HEK293 (cell line): ENCODE measurements at regions of chr5 and their contacts with region 1.

Region 1: GRCh38 chr5:151115274-151115905 is 34.6 kb upstream of the TNIP1 start:
- H3K4me3 ChIP-seq: no peak overlapping the region
- H3K27ac ChIP-seq: no peak overlapping the region
- H3K4me1 ChIP-seq: no peaks in the 10 kb centered on the region
- CTCF ChIP-seq: peak; percentile 54

Region 2: GRCh38 chr5:150764530-150764929 is 350.9 kb before region 1 on chr5:
- CTCF ChIA-PET with region 1: no interaction called
- POLR2A ChIA-PET with region 1: no interaction called
- H3K4me3 ChIP-seq: no peak overlapping the region
- H3K27ac ChIP-seq: no peak overlapping the region
- H3K4me1 ChIP-seq: peaks cover 7% of the 10 kb centered on the region; the same call in 1 of the 2 replicates
- CTCF ChIP-seq: no peak

Region 3: GRCh38 chr5:150801117-150801927 is 314.1 kb before region 1 on chr5:
- CTCF ChIA-PET with region 1: interaction called, 16 read pairs
- POLR2A ChIA-PET with region 1: no interaction called
- H3K4me3 ChIP-seq: peak overlapping the region; percentile 27
- H3K27ac ChIP-seq: no peak overlapping the region
- H3K4me1 ChIP-seq: no peaks in the 10 kb centered on the region
- CTCF ChIP-seq: no peak; the same call in 1 of the 2 replicates

Region 4: DNA sequence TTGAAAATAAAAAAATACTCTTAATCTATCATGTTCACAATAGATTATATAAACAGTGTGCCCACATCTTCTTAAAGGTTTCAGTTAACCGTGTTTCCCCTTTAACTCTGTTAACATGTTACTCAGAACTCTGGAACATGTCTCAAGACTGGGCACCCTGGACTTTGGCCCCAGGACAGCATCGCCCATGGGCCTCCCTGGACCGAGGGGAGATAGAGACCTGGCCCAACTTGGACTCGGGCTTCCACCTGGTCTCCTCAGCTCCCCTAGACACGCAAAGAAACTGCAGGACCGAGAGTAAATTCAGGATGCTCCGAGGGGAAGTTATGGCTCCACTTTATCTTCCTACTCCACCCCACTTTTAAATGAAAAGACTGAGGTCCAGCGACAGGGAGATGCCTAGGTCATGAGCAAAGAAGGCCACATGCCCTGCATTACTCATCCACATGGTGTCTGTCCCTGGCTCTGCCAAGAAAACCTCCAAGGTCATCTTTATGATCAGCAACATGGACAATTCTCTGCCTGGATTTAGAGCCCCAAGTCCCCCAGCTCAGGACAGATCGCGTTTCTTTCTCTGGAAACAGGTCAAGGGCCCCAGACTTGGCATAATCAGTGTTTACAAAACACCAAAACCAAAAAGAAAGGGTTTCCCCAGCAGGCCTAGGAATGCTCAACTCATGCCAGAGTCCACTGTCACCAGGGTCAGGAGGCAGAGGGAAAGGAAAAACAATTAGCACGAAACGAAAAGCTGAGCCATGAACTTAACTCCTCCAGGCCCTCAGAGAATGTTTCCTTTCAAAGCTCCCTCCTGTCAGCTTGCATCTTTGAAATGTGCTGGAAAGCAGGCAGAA is 77.6 kb before region 1 on chr5:
- CTCF ChIA-PET with region 1: interaction called, 11 read pairs
- POLR2A ChIA-PET with region 1: no interaction called
- H3K4me3 ChIP-seq: no peak overlapping the region
- H3K27ac ChIP-seq: no peak overlapping the region
- H3K4me1 ChIP-seq: 0 out of 2 replicates have a peak, but pooled peaks cover 3% of the 10 kb centered on the region
- CTCF ChIP-seq: no peak

Region 5: GRCh38 chr5:151080623-151081430 is 34.6 kb before region 1 on chr5 and contains the start of gene TNIP1:
- CTCF ChIA-PET with region 1: interaction called, 22 read pairs
- POLR2A ChIA-PET with region 1: interaction called, 3 read pairs
- H3K4me3 ChIP-seq: peak within 1 kb of the TSS; percentile 98
- H3K27ac ChIP-seq: peak within 1 kb of the TSS; percentile 96
- H3K4me1 ChIP-seq: peaks cover 6% of the 10 kb centered on the region; the same call in 1 of the 2 replicates
- CTCF ChIP-seq: peak; percentile 82

Region 6: DNA sequence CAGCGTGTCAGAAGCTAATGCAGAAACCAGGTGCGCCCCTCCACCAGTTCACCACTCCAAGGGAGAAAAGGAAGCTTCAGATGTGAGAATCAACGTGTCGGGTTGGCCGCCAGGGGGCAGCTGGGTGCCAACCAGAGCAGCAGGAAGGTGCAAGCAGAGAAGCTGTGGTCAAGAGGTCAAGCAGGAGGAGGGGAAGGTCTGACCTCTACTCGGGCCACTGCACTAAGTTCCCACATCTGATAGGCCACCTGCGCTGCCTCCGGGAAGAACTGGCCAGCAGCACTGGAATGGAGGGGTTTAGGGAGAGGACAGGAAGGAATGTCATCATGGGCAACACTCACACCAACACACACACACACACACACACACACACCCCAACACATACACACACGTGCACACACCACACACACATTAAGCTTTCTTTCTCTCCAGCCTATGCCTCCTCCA is 10.8 kb after region 1 on chr5:
- CTCF ChIA-PET with region 1: interaction called, 35 read pairs
- POLR2A ChIA-PET with region 1: interaction called, 4 read pairs
- H3K4me3 ChIP-seq: no peak overlapping the region
- H3K27ac ChIP-seq: no peak overlapping the region
- H3K4me1 ChIP-seq: no peaks in the 10 kb centered on the region
- CTCF ChIP-seq: peak; percentile 83